Common myeloid progenitor, CD34-positive (primary cell): ENCODE measurements at regions of chr6 and their contacts with region 1.

Region 1: GRCh38 chr6:73732845-73733675 is 37.1 kb downstream of the CD109 start:
- DNase-seq: peak; percentile 74 to 89 (median 85)
- H3K4me3 ChIP-seq: no peak overlapping the region
- H3K27ac ChIP-seq: no peak overlapping the region
- H3K4me1 ChIP-seq: peaks cover 2 to 18% (median 13%) of the 10 kb centered on the region in 4 experiments
- H3K27me3 ChIP-seq: no peaks in the 10 kb centered on the region

Region 2: GRCh38 chr6:73653571-73654424 is 79.3 kb before region 1 on chr6 and contains the start of gene SLC17A5:
- CTCF ChIA-PET with region 1: interaction called, 37 read pairs
- POLR2A ChIA-PET with region 1: interaction called, 3 read pairs
- DNase-seq: peak; percentile 92 to 97 (median 95)
- H3K4me3 ChIP-seq: peak within 1 kb of the TSS; percentile 86 to 97 (median 94)
- H3K27ac ChIP-seq: peak within 1 kb of the TSS; percentile 61 to 90
- H3K4me1 ChIP-seq: peaks cover 4 to 26% (median 15%) of the 10 kb centered on the region in 4 experiments
- H3K27me3 ChIP-seq: no peaks in the 10 kb centered on the region

Region 3: DNA sequence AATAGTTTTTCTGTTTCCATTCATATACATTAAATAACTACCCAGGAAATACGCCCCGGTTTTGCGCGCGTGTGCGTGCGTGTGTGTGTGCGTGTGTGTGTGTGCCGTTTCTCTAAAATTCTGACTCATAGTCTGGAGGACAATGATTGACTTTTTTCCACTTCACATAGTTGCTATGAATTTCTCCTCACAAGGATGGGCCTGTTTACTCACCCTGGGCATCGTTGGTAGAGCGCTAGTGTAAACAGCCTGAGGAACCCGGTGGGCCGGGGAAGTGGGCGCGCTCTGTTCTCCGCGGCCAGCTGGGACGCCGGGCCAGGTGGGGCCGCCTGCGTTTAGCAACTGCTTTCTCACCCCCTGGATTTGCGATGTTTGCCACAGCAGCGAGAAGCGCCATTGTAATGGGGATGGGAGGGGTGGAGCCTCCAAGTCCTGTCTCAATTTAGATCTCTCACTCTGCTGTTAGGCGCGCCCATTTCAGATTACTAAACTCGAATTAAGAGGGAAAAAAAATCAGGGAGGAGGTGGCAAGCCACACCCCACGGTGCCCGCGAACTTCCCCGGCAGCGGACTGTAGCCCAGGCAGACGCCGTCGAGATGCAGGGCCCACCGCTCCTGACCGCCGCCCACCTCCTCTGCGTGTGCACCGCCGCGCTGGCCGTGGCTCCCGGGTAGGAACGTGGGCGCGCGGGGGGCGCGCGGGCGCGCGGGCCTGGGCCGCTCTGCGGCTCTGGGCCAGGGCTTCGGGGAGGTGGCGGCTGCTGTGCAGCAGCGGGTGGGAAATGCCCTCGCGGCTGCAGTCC is 37.2 kb before region 1 on chr6 and contains the start of gene CD109:
- CTCF ChIA-PET with region 1: interaction called, 68 read pairs
- POLR2A ChIA-PET with region 1: no interaction called
- DNase-seq: peak; percentile 87 to 97 (median 96)
- H3K4me3 ChIP-seq: peak within 1 kb of the TSS; percentile 73 to 97 (median 85)
- H3K27ac ChIP-seq: peak within 1 kb of the TSS; percentile 86 to 94
- H3K4me1 ChIP-seq: peaks cover 31 to 52% (median 45%) of the 10 kb centered on the region in 4 experiments
- H3K27me3 ChIP-seq: no peaks in the 10 kb centered on the region

Region 4: DNA sequence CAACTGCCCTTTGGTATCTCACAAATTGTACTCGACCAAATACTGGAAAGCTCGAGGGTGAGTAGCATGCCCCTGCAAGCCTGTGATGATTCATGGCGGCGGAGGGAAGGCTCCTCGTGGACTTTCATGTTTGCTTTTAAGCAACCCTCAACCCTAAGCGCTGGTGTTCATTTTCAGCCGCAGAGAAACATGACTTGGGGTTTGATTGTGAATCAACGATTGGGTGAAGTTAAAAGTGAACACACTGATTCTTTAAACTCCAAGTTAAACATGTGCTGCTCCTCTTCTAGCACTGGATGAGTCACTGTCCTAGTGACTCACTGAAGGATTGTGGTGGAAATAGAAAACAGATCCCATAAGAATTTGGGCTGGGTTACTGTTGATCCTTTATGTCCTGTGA is 28.8 kb before region 1 on chr6:
- CTCF ChIA-PET with region 1: interaction called, 20 read pairs
- POLR2A ChIA-PET with region 1: no interaction called
- DNase-seq: no peak
- H3K4me3 ChIP-seq: no peak overlapping the region
- H3K27ac ChIP-seq: peak overlapping the region in 1 of 2 experiments; percentile 34
- H3K4me1 ChIP-seq: peaks cover 5 to 16% (median 8%) of the 10 kb centered on the region in 4 experiments
- H3K27me3 ChIP-seq: no peaks in the 10 kb centered on the region

Region 5: GRCh38 chr6:73713410-73714147 is 19.5 kb before region 1 on chr6:
- CTCF ChIA-PET with region 1: interaction called, 42 read pairs
- POLR2A ChIA-PET with region 1: no interaction called
- DNase-seq: peak; percentile 94 to 99 (median 99)
- H3K4me3 ChIP-seq: peak overlapping the region in 5 of 7 experiments; percentile 33 to 62 (median 46)
- H3K27ac ChIP-seq: peak overlapping the region; percentile 83 to 92
- H3K4me1 ChIP-seq: peaks cover 11 to 50% (median 47%) of the 10 kb centered on the region in 4 experiments
- H3K27me3 ChIP-seq: no peaks in the 10 kb centered on the region